ENCODE measurements at regions of chr15 and their contacts with region 1.

Region 1: GRCh38 chr15:42891569-42891968 is 29.0 kb downstream of the TTBK2 start:
- DNase-seq: peak; percentile 22
- H3K4me3 ChIP-seq: no peak overlapping the region
- H3K27ac ChIP-seq: no peak overlapping the region
- H3K4me1 ChIP-seq: peaks cover 6% of the 10 kb centered on the region
- H3K27me3 ChIP-seq: no peaks in the 10 kb centered on the region
- CTCF ChIP-seq: no peak

Region 2: GRCh38 chr15:42931702-42932486 is 40.3 kb after region 1 on chr15:
- CTCF ChIA-PET with region 1: interaction called, 12 read pairs
- POLR2A ChIA-PET with region 1: no interaction called
- intact Hi-C with region 1: no loop called
- DNase-seq: no peak
- H3K4me3 ChIP-seq: no peak overlapping the region
- H3K27ac ChIP-seq: no peak overlapping the region
- H3K4me1 ChIP-seq: no peaks in the 10 kb centered on the region
- H3K27me3 ChIP-seq: no peaks in the 10 kb centered on the region
- CTCF ChIP-seq: no peak